ENCODE measurements at regions of chr22 and their contacts with region 1.

Region 1: DNA sequence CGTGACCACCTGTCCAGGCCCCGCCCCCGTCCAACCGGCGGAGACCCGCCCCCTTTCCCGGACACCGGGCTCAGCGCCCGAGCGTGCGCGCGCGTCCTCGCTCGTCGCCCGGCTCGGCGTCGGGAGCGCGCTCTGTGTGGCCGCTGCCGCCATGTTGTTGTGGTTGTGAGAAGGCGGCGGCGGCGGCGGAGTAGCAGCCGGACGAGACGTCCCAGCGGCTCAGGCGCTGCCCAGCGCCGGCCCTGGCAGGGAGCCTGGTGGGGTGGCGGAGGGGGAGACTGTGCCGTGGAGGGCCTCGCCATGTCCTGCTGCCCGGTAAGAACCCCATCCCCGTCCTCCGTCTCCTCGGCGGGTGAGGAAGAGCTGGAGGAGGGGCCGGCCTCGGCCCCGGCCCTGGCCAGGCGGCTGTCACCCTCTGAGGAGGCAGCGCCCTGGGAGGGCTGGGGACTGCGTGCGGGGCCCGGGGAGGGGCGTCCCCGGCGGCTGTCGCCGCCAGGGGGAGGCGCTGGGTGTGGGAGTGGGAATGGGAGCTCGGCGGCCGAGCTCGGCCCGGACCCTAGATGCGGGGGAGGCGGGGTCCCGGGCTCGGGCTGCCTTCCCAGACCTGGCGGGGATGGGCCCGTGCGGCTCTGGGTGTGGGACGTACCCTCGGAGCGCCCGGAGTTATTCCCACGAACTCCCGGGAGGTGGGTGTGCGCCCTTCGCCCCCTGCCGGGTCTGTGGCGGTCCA is at the start of gene MTMR3:
- DNase-seq: peak; percentile 87
- H3K4me3 Mint-ChIP-seq: peak within 1 kb of the TSS; percentile 84
- H3K27ac Mint-ChIP-seq: peak within 1 kb of the TSS; percentile 71
- H3K4me1 Mint-ChIP-seq: peaks cover 7% of the 10 kb centered on the region
- H3K27me3 Mint-ChIP-seq: no peaks in the 10 kb centered on the region
- CTCF ChIP-seq: peak; percentile 44
- total RNA-seq, gene MTMR3: 34.4 and 36.4 TPM in 2 replicates

Region 2: GRCh38 chr22:29907815-29908515 is 24.8 kb after region 1 on chr22:
- CTCF ChIA-PET with region 1: interaction called, 3 read pairs
- POLR2A ChIA-PET with region 1: interaction called, 15 read pairs
- intact Hi-C with region 1: no loop called
- DNase-seq: peak; percentile 98
- H3K4me3 Mint-ChIP-seq: peak overlapping the region; percentile 60
- H3K27ac Mint-ChIP-seq: peak overlapping the region; percentile 52
- H3K4me1 Mint-ChIP-seq: peaks cover 25% of the 10 kb centered on the region
- H3K27me3 Mint-ChIP-seq: no peaks in the 10 kb centered on the region
- CTCF ChIP-seq: no peak

Region 3: DNA sequence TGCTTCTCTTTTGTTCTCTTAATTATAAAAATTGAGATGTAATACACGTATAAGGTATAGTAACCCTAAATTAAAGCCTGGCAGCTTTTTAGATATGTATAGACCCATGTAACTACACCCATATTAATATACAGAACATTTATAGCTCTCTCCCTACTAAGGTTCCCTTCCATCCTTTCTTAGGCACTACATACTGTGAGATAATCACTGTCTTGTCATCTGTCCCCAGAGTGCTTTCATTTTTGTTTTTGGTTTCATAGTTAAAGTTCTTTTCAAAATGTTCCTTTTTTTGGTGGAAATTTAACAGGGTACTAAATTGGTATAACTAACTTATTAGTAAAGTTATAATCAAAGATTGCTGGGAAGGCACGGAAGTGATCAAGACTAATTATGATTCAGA is 48.9 kb after region 1 on chr22:
- CTCF ChIA-PET with region 1: no interaction called
- POLR2A ChIA-PET with region 1: no interaction called
- intact Hi-C with region 1: no loop called
- DNase-seq: no peak
- H3K4me3 Mint-ChIP-seq: no peak overlapping the region
- H3K27ac Mint-ChIP-seq: no peak overlapping the region
- H3K4me1 Mint-ChIP-seq: no peaks in the 10 kb centered on the region
- H3K27me3 Mint-ChIP-seq: no peaks in the 10 kb centered on the region
- CTCF ChIP-seq: no peak

Region 4: GRCh38 chr22:29994027-29994715 is 111.0 kb after region 1 on chr22:
- CTCF ChIA-PET with region 1: no interaction called
- POLR2A ChIA-PET with region 1: interaction called, 7 read pairs
- intact Hi-C with region 1: loop called (anchors 1 kb)
- DNase-seq: peak; percentile 78
- H3K4me3 Mint-ChIP-seq: no peak overlapping the region
- H3K27ac Mint-ChIP-seq: peak overlapping the region; percentile 86
- H3K4me1 Mint-ChIP-seq: peaks cover 31% of the 10 kb centered on the region
- H3K27me3 Mint-ChIP-seq: no peaks in the 10 kb centered on the region
- CTCF ChIP-seq: peak; percentile 34